ENCODE measurements at regions of chr14 and their contacts with region 1.

Region 1: GRCh38 chr14:56339855-56340701 is 221.9 kb downstream of the PELI2 start:
- DNase-seq: peak; percentile 88
- ATAC-seq: peak; percentile 95

Region 2: DNA sequence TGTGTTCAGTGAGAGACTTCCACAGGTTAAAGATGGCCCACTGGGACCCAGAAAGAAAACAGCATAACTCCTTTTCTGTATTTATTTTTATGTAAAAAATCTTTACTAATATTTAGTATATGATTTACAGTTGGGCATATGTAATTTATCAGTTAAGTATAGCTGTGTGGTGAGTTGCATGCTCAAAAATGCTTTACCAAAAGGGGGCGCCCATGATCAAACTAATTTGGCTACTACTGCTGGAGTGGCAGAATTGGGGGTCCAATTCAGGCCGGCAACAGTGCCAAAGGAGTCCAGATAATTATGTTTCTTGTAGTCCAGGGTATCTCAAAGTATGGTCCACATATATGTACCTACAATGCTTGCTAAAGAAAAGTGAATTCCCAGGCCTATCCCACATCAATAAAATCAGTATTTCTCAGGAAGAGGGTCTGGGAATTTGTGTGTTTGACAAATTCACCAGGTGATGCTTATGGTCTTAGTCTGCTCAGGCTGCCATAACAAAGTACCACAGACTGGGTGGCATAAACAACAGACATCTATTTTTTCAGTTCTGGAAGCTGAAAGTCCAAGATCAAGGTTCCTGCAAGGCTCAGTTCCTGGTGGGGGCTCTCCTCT is 608.1 kb before region 1 on chr14:
- intact Hi-C with region 1: loop called (anchors 10 kb)
- DNase-seq: no peak
- ATAC-seq: no peak

Region 3: GRCh38 chr14:56294130-56294529 is 45.9 kb before region 1 on chr14:
- intact Hi-C with region 1: no loop called
- DNase-seq: no peak
- ATAC-seq: no peak

Region 4: GRCh38 chr14:56313789-56314188 is 26.3 kb before region 1 on chr14:
- intact Hi-C with region 1: loop called (anchors 2 kb)
- DNase-seq: no peak
- ATAC-seq: no peak

Region 5: DNA sequence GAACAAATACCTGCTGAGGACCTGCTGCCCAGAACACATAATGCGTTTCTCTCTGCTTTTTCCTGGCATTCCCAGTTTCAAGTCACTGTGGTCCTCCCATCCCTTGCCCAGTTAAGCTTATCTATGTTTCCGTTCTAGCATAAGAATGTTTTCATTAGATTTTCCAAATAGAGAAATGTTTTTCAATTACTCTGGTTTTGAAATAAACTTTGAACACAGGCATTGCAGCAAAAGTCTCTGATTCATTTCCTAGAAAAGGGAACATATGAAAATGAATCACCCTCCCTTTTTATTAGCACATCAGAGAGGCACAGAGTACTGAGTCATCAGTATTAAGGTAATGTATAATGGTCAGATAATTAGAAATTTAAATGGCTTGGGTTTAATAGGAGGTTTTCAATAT is 38.4 kb after region 1 on chr14:
- intact Hi-C with region 1: no loop called
- DNase-seq: no peak
- ATAC-seq: no peak

Measured in Right ventricle myocardium inferior (tissue), 1 donor.